ENCODE measurements at regions of chr6 and their contacts with region 1.

Region 1: GRCh38 chr6:128005009-128005408 is 104.2 kb upstream of the THEMIS start:
- DNase-seq: no peak
- ATAC-seq: no peak
- H3K4me3 ChIP-seq: no peak overlapping the region
- H3K27ac ChIP-seq: no peak overlapping the region
- H3K4me1 ChIP-seq: peaks cover 21% of the 10 kb centered on the region
- H3K27me3 ChIP-seq: no peaks in the 10 kb centered on the region
- CTCF ChIP-seq: no peak
- EP300 ChIP-seq: no peak
- POLR2A ChIP-seq: no peak
- RAD21 ChIP-seq: no peak

Region 2: GRCh38 chr6:127971945-127972391 is 33.0 kb before region 1 on chr6:
- CTCF ChIA-PET with region 1: no interaction called
- POLR2A ChIA-PET with region 1: no interaction called
- in situ Hi-C with region 1: no loop called
- intact Hi-C with region 1: no loop called
- DNase-seq: peak; percentile 6
- ATAC-seq: no peak
- H3K4me3 ChIP-seq: no peak overlapping the region
- H3K27ac ChIP-seq: no peak overlapping the region
- H3K4me1 ChIP-seq: no peaks in the 10 kb centered on the region
- H3K27me3 ChIP-seq: no peaks in the 10 kb centered on the region
- CTCF ChIP-seq: no peak
- EP300 ChIP-seq: no peak
- POLR2A ChIP-seq: no peak
- RAD21 ChIP-seq: no peak

Region 3: DNA sequence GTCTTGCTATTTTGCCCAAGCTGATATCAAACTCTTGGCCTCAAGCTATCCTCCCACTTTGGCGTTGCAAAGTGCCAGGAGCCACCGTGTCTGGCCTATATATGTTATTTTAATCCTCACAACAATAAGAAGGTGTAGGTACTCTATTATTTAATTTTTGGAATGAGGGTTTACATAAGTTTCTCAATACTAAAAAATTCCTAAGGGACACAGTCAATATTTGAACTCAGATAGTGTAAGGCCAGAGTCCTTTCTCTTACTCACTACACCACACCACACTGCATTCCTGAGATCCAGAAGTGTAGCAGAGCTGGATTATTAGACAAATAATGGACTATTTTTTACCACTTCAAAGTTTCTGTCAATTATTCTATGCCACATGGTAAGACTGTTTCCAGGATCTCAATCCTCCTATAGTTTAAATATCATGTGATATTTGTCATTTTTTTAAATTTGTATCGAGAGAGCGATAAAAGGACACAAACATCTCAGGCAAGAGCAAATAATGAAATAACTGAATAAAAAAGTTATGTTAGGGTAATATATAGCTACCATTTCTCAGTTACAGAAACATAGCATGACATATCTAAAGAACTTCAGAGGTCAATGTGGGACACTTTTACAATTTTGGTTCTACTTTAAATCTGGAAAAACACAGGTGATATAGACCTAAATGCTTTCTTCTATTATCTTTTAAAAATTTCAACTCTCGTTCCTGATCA is 58.0 kb after region 1 on chr6:
- CTCF ChIA-PET with region 1: interaction called, 3 read pairs
- POLR2A ChIA-PET with region 1: interaction called, 3 read pairs
- in situ Hi-C with region 1: no loop called
- intact Hi-C with region 1: loop called (anchors 5 kb)
- DNase-seq: peak; percentile 98
- ATAC-seq: peak; percentile 99
- H3K4me3 ChIP-seq: peak overlapping the region in 1 of 3 experiments; percentile 5; a peak in 1 of 6 replicates
- H3K27ac ChIP-seq: peak overlapping the region; percentile 77
- H3K4me1 ChIP-seq: peaks cover 54% of the 10 kb centered on the region
- H3K27me3 ChIP-seq: no peaks in the 10 kb centered on the region
- CTCF ChIP-seq: no peak
- EP300 ChIP-seq: peak; percentile 98 to 99
- POLR2A ChIP-seq: no peak
- RAD21 ChIP-seq: peak; percentile 38; the same call in 1 of the 2 replicates

Measured in HepG2 (cell line).